ENCODE measurements at regions of chrX and their contacts with region 1.

Region 1: GRCh38 chrX:10709276-10709675 is 88.9 kb upstream of the MID1 start:
- DNase-seq: no peak
- H3K4me3 ChIP-seq: no peak overlapping the region
- H3K27ac ChIP-seq: no peak overlapping the region
- H3K4me1 ChIP-seq: no peaks in the 10 kb centered on the region
- H3K27me3 ChIP-seq: no peaks in the 10 kb centered on the region
- CTCF ChIP-seq: no peak
- EP300 ChIP-seq: no peak
- RAD21 ChIP-seq: no peak

Region 2: GRCh38 chrX:10722851-10723250 is 13.6 kb after region 1 on chrX:
- CTCF ChIA-PET with region 1: interaction called, 12 read pairs
- POLR2A ChIA-PET with region 1: no interaction called
- DNase-seq: peak; percentile 65
- H3K4me3 ChIP-seq: no peak overlapping the region
- H3K27ac ChIP-seq: no peak overlapping the region
- H3K4me1 ChIP-seq: no peaks in the 10 kb centered on the region
- H3K27me3 ChIP-seq: no peaks in the 10 kb centered on the region
- CTCF ChIP-seq: peak; percentile 90
- EP300 ChIP-seq: no peak
- RAD21 ChIP-seq: peak; percentile 80